ENCODE measurements at regions of chr5 and their contacts with region 1.

Region 1: GRCh38 chr5:59039296-59040023 is 456.6 kb downstream of the RAB3C start:
- DNase-seq: peak; percentile 86 to 96 (median 90)
- ATAC-seq: peak; percentile 79
- H3K4me3 ChIP-seq: peak overlapping the region; percentile 82
- H3K4me3 Mint-ChIP-seq: peak overlapping the region; percentile 86
- H3K27ac ChIP-seq: peak overlapping the region; percentile 60 to 89
- H3K27ac Mint-ChIP-seq: peak overlapping the region; percentile 96
- H3K4me1 ChIP-seq: peaks cover 21% of the 10 kb centered on the region
- H3K4me1 Mint-ChIP-seq: peaks cover 69% of the 10 kb centered on the region
- H3K27me3 ChIP-seq: no peaks in the 10 kb centered on the region
- H3K27me3 Mint-ChIP-seq: no peaks in the 10 kb centered on the region
- CTCF ChIP-seq: no peak

Region 2: GRCh38 chr5:59086024-59086423 is 46.6 kb after region 1 on chr5:
- CTCF ChIA-PET with region 1: interaction called, 7 read pairs
- POLR2A ChIA-PET with region 1: interaction called, 4 read pairs
- intact Hi-C with region 1: loop called in 1 of 2 experiments (anchors 5 kb)
- DNase-seq: peak in 2 of 14 experiments; percentile 17 to 19
- ATAC-seq: peak; percentile 41
- H3K4me3 ChIP-seq: no peak overlapping the region
- H3K4me3 Mint-ChIP-seq: no peak overlapping the region
- H3K27ac ChIP-seq: no peak overlapping the region
- H3K27ac Mint-ChIP-seq: no peak overlapping the region
- H3K4me1 ChIP-seq: no peaks in the 10 kb centered on the region
- H3K4me1 Mint-ChIP-seq: no peaks in the 10 kb centered on the region
- H3K27me3 ChIP-seq: no peaks in the 10 kb centered on the region
- H3K27me3 Mint-ChIP-seq: peaks cover 3% of the 10 kb centered on the region
- CTCF ChIP-seq: no peak

Region 3: DNA sequence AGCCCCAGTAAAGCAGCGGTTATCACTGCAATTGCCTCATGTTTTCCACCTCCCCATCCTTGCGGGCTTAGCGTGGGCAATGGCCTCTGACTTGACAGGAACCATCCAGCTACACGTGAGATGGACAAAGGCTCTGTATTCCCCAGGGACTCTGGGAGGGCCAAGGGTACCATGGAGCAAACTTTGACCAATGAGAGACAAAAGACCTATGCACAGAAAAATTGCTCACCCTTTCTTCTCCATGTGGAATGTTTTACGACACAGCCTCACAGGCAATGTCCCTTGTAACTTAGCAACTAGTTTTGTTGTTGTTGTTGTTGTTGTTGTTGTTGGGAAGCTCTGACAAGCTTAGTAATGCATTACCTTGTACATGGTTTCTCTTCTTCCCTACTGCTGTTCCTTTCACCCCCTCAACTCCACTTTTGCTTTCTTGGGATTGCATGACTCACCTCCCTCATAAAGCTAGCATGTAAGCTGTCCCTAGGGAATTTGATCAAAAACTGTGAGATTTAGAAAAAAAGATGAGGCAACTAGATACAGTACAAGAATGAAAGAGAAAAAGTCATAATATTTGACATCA is 94.3 kb after region 1 on chr5:
- CTCF ChIA-PET with region 1: interaction called, 25 read pairs
- POLR2A ChIA-PET with region 1: interaction called, 155 read pairs
- intact Hi-C with region 1: loop called in 1 of 2 experiments (anchors 1 kb)
- DNase-seq: no peak
- ATAC-seq: no peak
- H3K4me3 ChIP-seq: no peak overlapping the region
- H3K4me3 Mint-ChIP-seq: no peak overlapping the region
- H3K27ac ChIP-seq: no peak overlapping the region
- H3K27ac Mint-ChIP-seq: no peak overlapping the region
- H3K4me1 ChIP-seq: peaks cover 9% of the 10 kb centered on the region
- H3K4me1 Mint-ChIP-seq: peaks cover 41% of the 10 kb centered on the region
- H3K27me3 ChIP-seq: no peaks in the 10 kb centered on the region
- H3K27me3 Mint-ChIP-seq: no peaks in the 10 kb centered on the region
- CTCF ChIP-seq: no peak

Region 4: GRCh38 chr5:59158165-59158564 is 118.7 kb after region 1 on chr5:
- CTCF ChIA-PET with region 1: interaction called, 5 read pairs
- POLR2A ChIA-PET with region 1: interaction called, 4 read pairs
- intact Hi-C with region 1: loop called in 1 of 2 experiments (anchors 1 kb)
- DNase-seq: no peak
- ATAC-seq: no peak
- H3K4me3 ChIP-seq: no peak overlapping the region
- H3K4me3 Mint-ChIP-seq: no peak overlapping the region
- H3K27ac ChIP-seq: no peak overlapping the region
- H3K27ac Mint-ChIP-seq: no peak overlapping the region
- H3K4me1 ChIP-seq: peaks cover under 1% of the 10 kb centered on the region
- H3K4me1 Mint-ChIP-seq: peaks cover 15% of the 10 kb centered on the region
- H3K27me3 ChIP-seq: no peaks in the 10 kb centered on the region
- H3K27me3 Mint-ChIP-seq: no peaks in the 10 kb centered on the region
- CTCF ChIP-seq: no peak

Region 5: DNA sequence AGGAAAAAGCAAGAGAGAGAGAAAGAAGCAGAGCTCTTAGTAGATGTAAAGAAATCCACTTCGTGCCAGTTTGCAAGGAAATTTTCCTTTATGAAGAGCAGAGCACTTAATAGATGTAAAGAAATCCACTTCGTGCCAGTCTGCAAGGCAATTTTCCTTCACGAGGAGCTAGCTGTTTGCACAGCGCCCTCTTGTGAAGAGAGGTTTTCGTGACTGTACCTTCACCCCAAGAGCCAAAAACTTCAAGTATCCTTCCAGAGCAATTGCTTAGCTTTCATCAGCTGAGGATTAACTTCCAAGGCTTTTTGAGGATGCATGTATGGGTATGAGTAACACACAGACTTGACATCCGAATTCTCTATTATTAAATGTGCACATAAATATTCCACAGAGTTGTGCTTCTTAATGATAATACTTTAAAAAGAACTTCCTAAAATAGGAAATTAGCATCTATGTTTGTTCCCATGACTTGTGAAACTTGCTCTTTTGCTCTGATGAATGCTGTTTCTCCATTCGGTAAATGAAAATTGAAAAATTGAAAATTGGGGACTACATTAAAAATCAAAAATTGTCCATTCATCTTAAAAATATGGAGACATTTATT is 328.4 kb after region 1 on chr5:
- CTCF ChIA-PET with region 1: no interaction called
- POLR2A ChIA-PET with region 1: no interaction called
- intact Hi-C with region 1: loop called (anchors 5 to 10 kb)
- DNase-seq: peak; percentile 4 to 65 (median 26)
- ATAC-seq: peak; percentile 48
- H3K4me3 ChIP-seq: no peak overlapping the region
- H3K4me3 Mint-ChIP-seq: no peak overlapping the region
- H3K27ac ChIP-seq: no peak overlapping the region
- H3K27ac Mint-ChIP-seq: no peak overlapping the region
- H3K4me1 ChIP-seq: no peaks in the 10 kb centered on the region
- H3K4me1 Mint-ChIP-seq: no peaks in the 10 kb centered on the region
- H3K27me3 ChIP-seq: peaks cover 0 to 5% of the 10 kb centered on the region in 2 experiments
- H3K27me3 Mint-ChIP-seq: peaks cover 22% of the 10 kb centered on the region
- CTCF ChIP-seq: peak; percentile 72